Left ventricle myocardium inferior (tissue), 1 donor: ENCODE measurements at regions of chr17 and their contacts with region 1.

Region 1: DNA sequence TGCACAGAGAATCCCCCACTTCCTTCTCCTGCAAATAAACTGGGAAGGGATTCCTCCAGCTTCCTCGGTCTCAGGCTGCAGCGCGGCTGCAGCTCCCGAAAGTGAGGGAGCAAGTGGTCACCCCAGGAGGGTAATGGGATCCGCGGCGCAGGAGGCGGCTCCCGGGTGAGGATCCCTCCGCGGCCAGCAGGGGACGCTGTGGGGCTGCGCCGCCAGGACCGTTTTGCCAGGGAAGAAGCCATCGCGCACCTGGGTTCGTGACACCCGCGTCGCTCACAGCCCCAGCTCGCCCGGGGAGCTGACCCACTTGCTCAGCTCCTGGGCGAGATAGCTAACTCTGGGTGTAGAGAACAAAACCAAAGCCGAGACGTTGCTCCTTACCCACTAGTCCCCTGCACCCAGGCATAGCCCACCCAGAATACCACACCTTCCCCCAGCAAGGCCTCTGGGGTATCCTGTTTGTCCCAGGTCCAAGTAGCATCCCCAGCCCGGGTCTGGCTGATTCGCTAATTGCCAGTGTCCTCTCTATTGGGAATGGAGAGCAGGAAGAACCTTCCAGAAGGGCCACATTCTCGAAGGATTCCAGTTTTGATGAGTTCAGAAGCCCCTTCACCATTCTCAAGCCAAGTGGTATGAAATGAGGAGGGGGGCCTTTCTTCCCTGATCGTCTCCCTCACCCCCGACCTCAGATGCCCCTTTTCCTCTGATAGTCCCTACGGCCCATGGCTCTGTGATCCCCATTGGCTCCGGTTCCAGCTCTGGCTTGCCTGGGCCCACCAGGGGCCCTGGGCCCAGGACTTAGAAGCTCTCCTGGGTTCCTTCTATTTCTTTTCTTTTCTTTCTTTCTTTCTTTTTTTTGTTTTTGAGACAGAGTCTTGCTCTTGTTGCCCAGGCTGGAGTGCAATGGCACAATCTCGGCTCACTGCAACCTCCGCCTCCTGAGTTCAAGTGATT is 14.1 kb downstream of the CYGB start:
- DNase-seq: peak; percentile 78
- H3K4me3 ChIP-seq: no peak overlapping the region
- H3K27ac ChIP-seq: peak overlapping the region; percentile 22
- H3K4me1 ChIP-seq: peaks cover 45% of the 10 kb centered on the region
- H3K27me3 ChIP-seq: no peaks in the 10 kb centered on the region
- CTCF ChIP-seq: peak; percentile 100

Region 2: DNA sequence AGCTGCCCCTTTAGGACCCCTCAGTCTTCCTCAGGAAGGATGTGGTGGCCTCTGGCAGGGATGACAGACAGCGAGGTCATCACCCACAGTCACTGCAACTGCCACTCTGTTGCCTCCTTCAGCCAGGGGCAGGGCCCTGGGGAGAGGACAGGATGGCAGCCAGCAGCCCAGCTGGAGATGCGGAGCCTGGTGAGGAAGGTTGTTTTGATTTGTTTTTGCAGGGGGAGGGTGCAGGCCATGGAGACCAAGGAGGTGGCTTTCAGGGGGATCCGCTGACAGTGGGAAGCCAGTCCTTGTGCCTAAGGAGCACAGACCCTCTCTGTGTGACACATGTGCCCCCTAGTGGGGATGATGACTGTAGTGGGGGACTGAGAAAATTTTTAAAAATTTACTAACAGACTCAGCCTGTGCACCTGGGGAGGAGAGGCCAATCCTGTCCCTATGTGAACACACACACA is 23.9 kb after region 1 on chr17:
- intact Hi-C with region 1: loop called (anchors 2 kb)
- DNase-seq: peak; percentile 47
- H3K4me3 ChIP-seq: no peak overlapping the region
- H3K27ac ChIP-seq: peak overlapping the region; percentile 94
- H3K4me1 ChIP-seq: peaks cover 68% of the 10 kb centered on the region
- H3K27me3 ChIP-seq: no peaks in the 10 kb centered on the region
- CTCF ChIP-seq: peak; percentile 81

Region 3: GRCh38 chr17:76654408-76654807 is 131.0 kb after region 1 on chr17:
- intact Hi-C with region 1: no loop called
- DNase-seq: no peak
- H3K4me3 ChIP-seq: no peak overlapping the region
- H3K27ac ChIP-seq: no peak overlapping the region
- H3K4me1 ChIP-seq: peaks cover 1% of the 10 kb centered on the region
- H3K27me3 ChIP-seq: no peaks in the 10 kb centered on the region
- CTCF ChIP-seq: no peak

Region 4: DNA sequence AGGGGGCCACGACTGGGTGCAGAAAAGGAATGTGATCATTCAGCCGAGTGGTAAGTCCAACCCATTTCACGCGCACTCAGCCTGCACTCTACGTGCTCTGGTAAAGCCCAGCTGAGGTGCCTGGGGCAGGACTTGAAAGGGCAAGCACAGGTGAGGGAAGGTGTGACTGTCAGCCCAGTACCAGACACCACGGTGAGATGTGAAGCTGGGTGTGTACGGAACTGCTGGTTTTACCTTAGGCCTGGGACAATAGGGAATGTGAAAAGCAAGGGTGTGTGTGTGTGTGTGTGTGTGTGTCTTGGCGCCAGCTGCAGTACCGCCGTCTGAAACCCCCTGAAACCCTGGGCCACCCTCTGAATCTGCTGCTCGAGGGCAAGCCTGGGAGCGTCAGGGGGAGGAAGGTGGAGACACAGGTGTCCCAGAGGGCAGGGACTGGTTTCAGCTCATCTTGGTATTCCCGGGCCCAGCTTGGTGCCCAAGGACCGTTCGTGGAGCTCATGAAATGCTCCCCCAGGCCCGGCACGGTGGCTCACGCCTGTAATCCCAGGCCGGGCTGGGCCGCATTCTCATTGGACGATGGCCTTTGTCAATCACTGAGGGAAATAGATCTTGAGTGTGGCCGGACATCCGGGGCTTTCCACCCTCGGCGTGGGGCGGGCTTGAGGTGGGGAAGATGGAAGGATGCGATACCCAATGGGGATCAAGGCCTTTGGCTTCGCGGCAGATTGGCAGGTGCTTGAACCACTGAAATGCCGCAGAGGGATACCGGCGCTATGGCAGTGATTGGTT is 148.0 kb after region 1 on chr17:
- intact Hi-C with region 1: loop called (anchors 10 kb)
- DNase-seq: peak; percentile 100
- H3K4me3 ChIP-seq: peak overlapping the region; percentile 75
- H3K27ac ChIP-seq: peak overlapping the region; percentile 93
- H3K4me1 ChIP-seq: peaks cover 26% of the 10 kb centered on the region
- H3K27me3 ChIP-seq: no peaks in the 10 kb centered on the region
- CTCF ChIP-seq: no peak